Psoas muscle (tissue), 8 donors: ENCODE measurements at regions of chr1 and their contacts with region 1.

Region 1: GRCh38 chr1:182391362-182392044 is at the start of gene GLUL:
- DNase-seq: peak; percentile 96 to 97
- ATAC-seq: peak; percentile 84 to 93 (median 87)
- H3K4me3 ChIP-seq: peak within 1 kb of the TSS; percentile 96
- H3K27ac ChIP-seq: peak within 1 kb of the TSS; percentile 98
- H3K4me1 ChIP-seq: peaks cover 40% of the 10 kb centered on the region
- H3K27me3 ChIP-seq: no peaks in the 10 kb centered on the region
- CTCF ChIP-seq: peak; percentile 26
- total RNA-seq, gene GLUL: 1,167 to 6,689 (median 3,344) TPM

Region 2: GRCh38 chr1:182348961-182349747 is 42.3 kb before region 1 on chr1:
- intact Hi-C with region 1: loop called in 1 of 2 experiments (anchors 2 kb)
- DNase-seq: peak; percentile 74 to 89
- ATAC-seq: peak; percentile 79 to 88 (median 84)
- H3K4me3 ChIP-seq: no peak overlapping the region
- H3K27ac ChIP-seq: peak overlapping the region; percentile 87
- H3K4me1 ChIP-seq: peaks cover 25% of the 10 kb centered on the region
- H3K27me3 ChIP-seq: no peaks in the 10 kb centered on the region
- CTCF ChIP-seq: no peak

Region 3: GRCh38 chr1:182629499-182630096 is 238.1 kb after region 1 on chr1:
- intact Hi-C with region 1: no loop called
- DNase-seq: no peak
- ATAC-seq: no peak
- H3K4me3 ChIP-seq: no peak overlapping the region
- H3K27ac ChIP-seq: no peak overlapping the region
- H3K4me1 ChIP-seq: no peaks in the 10 kb centered on the region
- H3K27me3 ChIP-seq: no peaks in the 10 kb centered on the region
- CTCF ChIP-seq: no peak